Endothelial cell of umbilical vein (primary cell): ENCODE measurements at regions of chr2 and their contacts with region 1.

Region 1: GRCh38 chr2:46296840-46297545 is at the start of gene EPAS1:
- DNase-seq: peak; percentile 93
- H3K4me3 ChIP-seq: peak within 1 kb of the TSS; percentile 64 to 86 (median 66)
- H3K27ac ChIP-seq: peak within 1 kb of the TSS; percentile 81
- H3K4me1 ChIP-seq: peaks cover 23% of the 10 kb centered on the region
- H3K27me3 ChIP-seq: no peaks in the 10 kb centered on the region
- CTCF ChIP-seq: no peak
- POLR2A ChIP-seq: peak; percentile 97
- total RNA-seq, gene EPAS1: 374 and 397 TPM in 2 replicates

Region 2: DNA sequence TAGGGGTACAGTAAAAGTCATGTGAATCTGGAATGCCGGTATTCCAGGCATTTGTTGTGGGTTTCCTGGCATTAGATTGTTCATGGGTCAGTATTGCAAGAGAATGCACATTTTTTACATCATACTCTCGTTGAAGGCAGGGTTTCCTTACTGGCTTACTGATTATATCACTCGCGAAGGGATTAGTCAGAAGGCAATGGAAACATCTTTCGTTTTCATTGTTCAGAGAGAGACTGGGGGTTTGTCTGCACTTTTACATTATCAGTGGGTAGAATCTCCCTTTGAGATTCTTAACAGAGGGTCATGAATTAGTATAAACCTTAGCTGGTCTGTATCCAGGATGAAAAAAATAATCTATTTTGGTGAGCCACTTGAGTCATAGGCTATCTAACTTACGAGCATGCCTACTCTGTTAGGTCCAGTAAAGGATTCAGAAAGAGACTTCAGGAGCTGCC is 229.1 kb before region 1 on chr2:
- CTCF ChIA-PET with region 1: interaction called, 44 read pairs
- POLR2A ChIA-PET with region 1: interaction called, 19 read pairs
- dilution Hi-C with region 1: no loop called
- intact Hi-C with region 1: loop called (anchors 1 kb)
- DNase-seq: peak; percentile 98
- H3K4me3 ChIP-seq: peak overlapping the region in 1 of 3 experiments; percentile 40
- H3K27ac ChIP-seq: peak overlapping the region; percentile 95
- H3K4me1 ChIP-seq: peaks cover 53% of the 10 kb centered on the region
- H3K27me3 ChIP-seq: no peaks in the 10 kb centered on the region
- CTCF ChIP-seq: no peak
- POLR2A ChIP-seq: no peak

Region 3: DNA sequence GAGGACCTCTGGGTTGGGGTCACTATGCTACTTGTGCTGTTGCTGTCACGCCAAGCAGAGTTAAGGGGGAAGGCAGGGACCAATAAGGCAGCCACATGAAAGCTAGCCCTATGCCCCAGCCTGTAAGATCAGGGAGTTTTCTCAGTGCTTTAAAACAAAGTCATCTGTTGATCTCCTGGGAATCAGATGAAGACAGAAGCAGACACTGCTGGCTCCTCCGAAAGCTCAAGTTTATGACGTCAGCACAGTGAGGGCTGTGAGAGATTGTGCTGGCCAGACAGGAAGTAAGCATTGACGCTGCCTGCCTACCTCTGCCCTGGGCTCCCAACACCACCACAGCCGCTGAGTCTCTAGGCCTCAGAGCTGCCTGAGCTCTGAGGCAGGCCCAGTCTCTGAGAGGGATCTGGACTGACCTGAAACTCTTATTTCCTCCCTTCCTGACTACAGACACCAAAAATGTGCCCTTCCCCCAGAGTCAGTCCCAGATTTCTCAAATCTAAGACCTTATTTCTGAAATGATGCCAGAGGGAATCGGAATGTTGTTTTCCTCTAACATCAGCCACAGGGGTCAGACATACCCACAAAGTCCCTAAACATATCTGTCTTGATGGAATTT is 117.8 kb before region 1 on chr2:
- CTCF ChIA-PET with region 1: interaction called, 4 read pairs
- POLR2A ChIA-PET with region 1: interaction called, 5 read pairs
- dilution Hi-C with region 1: no loop called
- intact Hi-C with region 1: loop called (anchors 5 kb)
- DNase-seq: peak; percentile 88
- H3K4me3 ChIP-seq: no peak overlapping the region
- H3K27ac ChIP-seq: peak overlapping the region; percentile 84
- H3K4me1 ChIP-seq: peaks cover 13% of the 10 kb centered on the region
- H3K27me3 ChIP-seq: no peaks in the 10 kb centered on the region
- CTCF ChIP-seq: no peak
- POLR2A ChIP-seq: no peak

Region 4: GRCh38 chr2:46269544-46270273 is 27.3 kb before region 1 on chr2:
- CTCF ChIA-PET with region 1: interaction called, 8 read pairs
- POLR2A ChIA-PET with region 1: interaction called, 10 read pairs
- dilution Hi-C with region 1: no loop called
- intact Hi-C with region 1: no loop called
- DNase-seq: peak; percentile 51
- H3K4me3 ChIP-seq: no peak overlapping the region
- H3K27ac ChIP-seq: peak overlapping the region; percentile 41
- H3K4me1 ChIP-seq: peaks cover 73% of the 10 kb centered on the region
- H3K27me3 ChIP-seq: no peaks in the 10 kb centered on the region
- CTCF ChIP-seq: no peak
- POLR2A ChIP-seq: no peak

Region 5: GRCh38 chr2:46335391-46336282 is 38.6 kb after region 1 on chr2:
- CTCF ChIA-PET with region 1: interaction called, 8 read pairs
- POLR2A ChIA-PET with region 1: interaction called, 3 read pairs
- dilution Hi-C with region 1: no loop called
- intact Hi-C with region 1: loop called (anchors 1 kb)
- DNase-seq: peak; percentile 88
- H3K4me3 ChIP-seq: peak overlapping the region in 1 of 3 experiments; percentile 29
- H3K27ac ChIP-seq: peak overlapping the region; percentile 87
- H3K4me1 ChIP-seq: peaks cover 37% of the 10 kb centered on the region
- H3K27me3 ChIP-seq: no peaks in the 10 kb centered on the region
- CTCF ChIP-seq: no peak
- POLR2A ChIP-seq: peak; percentile 9

Region 6: GRCh38 chr2:46461011-46461674 is 164.2 kb after region 1 on chr2:
- CTCF ChIA-PET with region 1: no interaction called
- POLR2A ChIA-PET with region 1: no interaction called
- dilution Hi-C with region 1: no loop called
- intact Hi-C with region 1: loop called (anchors 1 kb)
- DNase-seq: peak; percentile 72
- H3K4me3 ChIP-seq: no peak overlapping the region
- H3K27ac ChIP-seq: no peak overlapping the region
- H3K4me1 ChIP-seq: no peaks in the 10 kb centered on the region
- H3K27me3 ChIP-seq: no peaks in the 10 kb centered on the region
- CTCF ChIP-seq: peak; percentile 93
- POLR2A ChIP-seq: no peak